ENCODE measurements at regions of chr5 and their contacts with region 1.

Region 1: DNA sequence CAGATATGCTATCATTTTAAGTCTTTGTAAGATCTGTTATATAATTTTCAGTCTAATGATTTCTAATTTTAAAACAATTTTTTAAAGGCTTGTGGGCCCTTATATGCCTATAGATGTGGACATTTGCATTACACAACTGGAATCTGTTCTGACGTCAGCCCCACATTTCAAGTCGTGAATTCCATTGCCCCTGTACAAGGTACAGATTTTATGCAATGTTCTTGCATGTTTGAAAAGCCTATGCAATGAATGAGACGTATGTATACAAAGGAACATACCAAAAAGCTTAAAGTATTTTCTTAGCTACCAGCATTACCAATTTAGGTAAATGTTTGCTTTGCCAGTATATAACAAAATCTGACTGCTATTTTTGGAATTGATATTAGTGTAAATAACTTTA is 77.2 kb downstream of the ITGA1 start:
- DNase-seq: peak; percentile 57 to 71
- H3K4me3 ChIP-seq: no peak overlapping the region
- H3K4me3 Mint-ChIP-seq: no peak overlapping the region
- H3K27ac Mint-ChIP-seq: no peak overlapping the region
- H3K4me1 ChIP-seq: peaks cover 27% of the 10 kb centered on the region
- H3K4me1 Mint-ChIP-seq: peaks cover 18% of the 10 kb centered on the region
- H3K27me3 ChIP-seq: no peaks in the 10 kb centered on the region
- H3K27me3 Mint-ChIP-seq: no peaks in the 10 kb centered on the region
- CTCF ChIP-seq: no peak

Region 2: GRCh38 chr5:52799983-52800393 is 64.9 kb before region 1 on chr5:
- CTCF ChIA-PET with region 1: no interaction called
- POLR2A ChIA-PET with region 1: interaction called, 10 read pairs
- intact Hi-C with region 1: loop called (anchors 1 kb)
- DNase-seq: peak; percentile 95 to 96
- H3K4me3 ChIP-seq: peak overlapping the region; percentile 76
- H3K4me3 Mint-ChIP-seq: peak overlapping the region; percentile 92
- H3K27ac Mint-ChIP-seq: peak overlapping the region; percentile 50
- H3K4me1 ChIP-seq: peaks cover 46% of the 10 kb centered on the region
- H3K4me1 Mint-ChIP-seq: peaks cover 38% of the 10 kb centered on the region
- H3K27me3 ChIP-seq: no peaks in the 10 kb centered on the region
- H3K27me3 Mint-ChIP-seq: no peaks in the 10 kb centered on the region
- CTCF ChIP-seq: no peak

Region 3: GRCh38 chr5:52885614-52886013 is 20.7 kb after region 1 on chr5:
- CTCF ChIA-PET with region 1: no interaction called
- POLR2A ChIA-PET with region 1: no interaction called
- intact Hi-C with region 1: loop called (anchors 1 kb)
- DNase-seq: no peak
- H3K4me3 ChIP-seq: no peak overlapping the region
- H3K4me3 Mint-ChIP-seq: no peak overlapping the region
- H3K27ac Mint-ChIP-seq: no peak overlapping the region
- H3K4me1 ChIP-seq: peaks cover 22% of the 10 kb centered on the region
- H3K4me1 Mint-ChIP-seq: peaks cover 24% of the 10 kb centered on the region
- H3K27me3 ChIP-seq: no peaks in the 10 kb centered on the region
- H3K27me3 Mint-ChIP-seq: no peaks in the 10 kb centered on the region
- CTCF ChIP-seq: no peak

Region 4: GRCh38 chr5:53311681-53312080 is 446.8 kb after region 1 on chr5:
- CTCF ChIA-PET with region 1: no interaction called
- POLR2A ChIA-PET with region 1: no interaction called
- intact Hi-C with region 1: no loop called
- DNase-seq: no peak
- H3K4me3 ChIP-seq: no peak overlapping the region
- H3K4me3 Mint-ChIP-seq: no peak overlapping the region
- H3K27ac Mint-ChIP-seq: no peak overlapping the region
- H3K4me1 ChIP-seq: no peaks in the 10 kb centered on the region
- H3K4me1 Mint-ChIP-seq: no peaks in the 10 kb centered on the region
- H3K27me3 ChIP-seq: no peaks in the 10 kb centered on the region; the same call in 1 of the 2 replicates
- H3K27me3 Mint-ChIP-seq: no peaks in the 10 kb centered on the region
- CTCF ChIP-seq: no peak